ENCODE measurements at regions of chr22 and their contacts with region 1.

Region 1: GRCh38 chr22:16917144-16918003 is 90.6 kb downstream of the GAB4 start:
- DNase-seq: peak; percentile 66
- ATAC-seq: peak; percentile 41 to 70

Region 2: GRCh38 chr22:16834971-16835370 is 82.4 kb before region 1 on chr22:
- intact Hi-C with region 1: no loop called
- DNase-seq: no peak
- ATAC-seq: peak in 1 of 2 donors; percentile 19

Region 3: DNA sequence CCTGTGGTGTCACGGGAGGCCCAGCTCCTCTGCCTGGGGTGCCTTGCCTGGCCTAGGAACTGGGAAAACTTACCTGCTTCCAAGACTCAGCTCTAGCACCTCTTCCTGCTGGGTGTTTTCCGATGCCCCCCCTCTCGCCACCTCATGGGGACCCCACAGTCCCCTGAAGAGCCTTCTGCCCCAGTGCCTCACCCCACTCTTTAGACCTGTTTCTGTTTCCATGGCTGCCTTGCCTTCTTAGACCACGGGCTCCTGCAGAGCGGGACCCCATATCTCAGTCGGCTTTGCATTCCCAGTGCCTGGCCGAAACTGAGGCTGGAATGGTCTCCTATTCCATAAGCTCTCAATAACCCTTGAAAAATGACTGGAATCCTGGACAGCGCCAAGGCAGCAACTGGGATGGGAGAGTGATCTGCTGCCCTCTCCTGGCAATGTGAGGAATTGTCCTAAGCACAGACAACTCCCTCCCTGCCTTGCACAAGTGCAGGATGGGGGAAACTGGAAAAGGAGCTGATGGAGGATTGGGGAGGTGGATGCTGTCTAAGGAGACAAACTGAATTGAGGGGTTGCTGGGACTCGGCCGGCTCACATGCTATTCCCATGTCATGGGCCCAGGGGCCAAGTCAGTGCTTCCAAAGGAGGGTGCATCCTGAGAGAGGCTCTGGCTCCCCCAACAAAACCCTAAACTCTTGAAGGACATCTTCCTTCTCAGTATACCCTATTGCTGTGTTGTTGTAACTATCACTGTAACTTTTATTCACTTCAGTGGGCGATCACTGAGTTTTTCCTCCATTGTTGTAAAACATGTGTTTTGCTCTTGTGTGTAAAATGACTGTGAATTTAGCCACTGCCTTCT is 140.8 kb after region 1 on chr22:
- intact Hi-C with region 1: loop called (anchors 2 to 10 kb)
- DNase-seq: peak; percentile 70
- ATAC-seq: peak; percentile 87